Sciatic nerve (tissue), 2 donors: ENCODE measurements at regions of chr12 and their contacts with region 1.

Region 1: DNA sequence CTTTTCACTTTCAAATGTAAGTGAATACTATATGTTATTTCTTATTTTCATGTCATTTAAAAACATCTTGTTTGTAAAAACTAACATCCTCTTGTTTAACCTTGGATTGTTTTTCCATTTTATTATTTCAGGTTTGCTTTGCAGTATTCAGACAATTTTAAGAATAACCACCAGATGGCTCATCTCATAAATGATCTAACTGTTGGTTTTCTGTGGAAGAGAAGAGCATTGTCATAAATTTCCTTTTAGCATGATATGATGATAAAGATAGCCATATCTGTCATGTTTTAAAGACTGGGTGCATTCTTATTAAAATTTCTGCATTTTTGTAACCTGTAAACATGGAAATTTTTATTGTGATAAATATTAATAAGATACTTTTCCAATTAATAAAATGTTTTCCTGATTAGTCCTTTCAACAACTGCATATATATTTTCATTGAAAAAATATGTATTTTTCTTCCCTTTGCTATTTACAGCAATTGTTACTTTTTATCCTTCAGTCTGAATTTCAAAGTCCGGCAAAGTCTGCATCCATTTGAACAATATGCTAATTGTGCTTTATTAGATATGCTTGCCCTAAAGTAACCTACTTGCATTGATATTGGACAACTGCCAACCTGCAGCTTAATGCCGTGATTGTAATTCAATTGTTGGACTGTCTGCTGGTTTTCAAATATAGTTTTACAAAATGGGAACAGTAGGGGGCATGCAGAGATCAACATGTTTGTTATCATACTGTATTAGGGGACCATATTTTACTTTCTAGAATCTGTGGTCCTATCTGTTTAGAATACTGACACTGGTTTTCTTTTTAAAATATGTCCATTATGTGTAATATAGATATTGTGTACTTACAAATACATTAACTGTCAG is 163.4 kb downstream of the GARIN6 start:
- DNase-seq: no peak
- ATAC-seq: peak; percentile 48

Region 2: DNA sequence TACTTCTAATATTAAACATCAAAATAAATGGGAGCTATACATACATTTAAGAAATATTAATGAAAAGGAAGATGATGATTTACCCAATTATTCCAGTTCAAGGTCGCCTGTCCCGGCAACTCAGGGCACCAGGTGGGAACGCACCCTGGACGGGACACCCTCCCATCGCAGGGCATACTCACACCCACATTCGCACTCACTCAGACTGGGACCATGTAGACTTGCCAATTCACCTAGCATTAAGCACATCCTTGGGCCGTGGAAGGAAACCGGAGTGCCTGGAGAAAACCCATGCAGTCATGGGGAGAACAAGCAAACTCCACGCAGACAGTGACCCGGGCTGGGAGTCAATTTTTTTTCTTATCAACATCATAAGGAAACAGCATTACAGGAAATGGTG is 691.0 kb before region 1 on chr12:
- intact Hi-C with region 1: loop called (anchors 5 kb)
- DNase-seq: no peak
- ATAC-seq: no peak